ENCODE measurements at regions of chr1 and their contacts with region 1.

Region 1: GRCh38 chr1:38046884-38047602 is 450 bp upstream of the POU3F1 start:
- DNase-seq: peak; percentile 64 to 92
- H3K4me3 ChIP-seq: peak overlapping the region; percentile 67 to 82
- H3K27ac ChIP-seq: peak overlapping the region; percentile 69 to 70
- H3K4me1 ChIP-seq: peaks cover 13 to 19% of the 10 kb centered on the region in 2 donors
- H3K27me3 ChIP-seq: peaks cover 25% of the 10 kb centered on the region
- CTCF ChIP-seq: peak in 2 of 3 experiments; percentile 3 to 13

Region 2: GRCh38 chr1:37995751-37996345 is 51.2 kb before region 1 on chr1:
- intact Hi-C with region 1: loop called (anchors 5 kb)
- DNase-seq: peak in 1 of 2 donors; percentile 91
- H3K4me3 ChIP-seq: peak overlapping the region; percentile 64 to 78
- H3K27ac ChIP-seq: peak overlapping the region; percentile 93 to 96
- H3K4me1 ChIP-seq: peaks cover 20 to 46% of the 10 kb centered on the region in 2 donors
- H3K27me3 ChIP-seq: no peaks in the 10 kb centered on the region
- CTCF ChIP-seq: no peak

Region 3: GRCh38 chr1:38114241-38115026 is 67.4 kb after region 1 on chr1:
- intact Hi-C with region 1: loop called (anchors 2 kb)
- DNase-seq: peak; percentile 27 to 86
- H3K4me3 ChIP-seq: no peak overlapping the region
- H3K27ac ChIP-seq: peak overlapping the region; percentile 56 to 85
- H3K4me1 ChIP-seq: peaks cover 4 to 10% of the 10 kb centered on the region in 2 donors
- H3K27me3 ChIP-seq: no peaks in the 10 kb centered on the region
- CTCF ChIP-seq: no peak

Region 4: GRCh38 chr1:38138498-38139233 is 91.6 kb after region 1 on chr1:
- intact Hi-C with region 1: loop called (anchors 2 kb)
- DNase-seq: peak; percentile 48 to 95
- H3K4me3 ChIP-seq: peak overlapping the region in 1 of 2 donors; percentile 36
- H3K27ac ChIP-seq: peak overlapping the region; percentile 63 to 68
- H3K4me1 ChIP-seq: peaks cover 0 to 21% of the 10 kb centered on the region in 2 donors
- H3K27me3 ChIP-seq: no peaks in the 10 kb centered on the region
- CTCF ChIP-seq: peak; percentile 41 to 43 (median 42)